Caco-2 (cell line): ENCODE measurements at regions of chr21 and their contacts with region 1.

Region 1: GRCh38 chr21:36028127-36029069 is 31.9 kb downstream of the SETD4 start:
- DNase-seq: peak; percentile 75 to 78
- H3K4me3 ChIP-seq: no peak overlapping the region
- H3K4me3 Mint-ChIP-seq: peak overlapping the region; percentile 35
- H3K27ac Mint-ChIP-seq: peak overlapping the region; percentile 26
- H3K4me1 ChIP-seq: peaks cover 18% of the 10 kb centered on the region
- H3K4me1 Mint-ChIP-seq: peaks cover 21% of the 10 kb centered on the region
- H3K27me3 ChIP-seq: no peaks in the 10 kb centered on the region
- H3K27me3 Mint-ChIP-seq: no peaks in the 10 kb centered on the region
- CTCF ChIP-seq: peak; percentile 80 to 93

Region 2: GRCh38 chr21:35400233-35400957 is 628.0 kb before region 1 on chr21:
- CTCF ChIA-PET with region 1: interaction called, 4 read pairs
- POLR2A ChIA-PET with region 1: no interaction called
- intact Hi-C with region 1: loop called (anchors 5 kb)
- DNase-seq: peak; percentile 39 to 66
- H3K4me3 ChIP-seq: no peak overlapping the region
- H3K4me3 Mint-ChIP-seq: no peak overlapping the region
- H3K27ac Mint-ChIP-seq: no peak overlapping the region
- H3K4me1 ChIP-seq: 0 out of 2 replicates have a peak, but pooled peaks cover 4% of the 10 kb centered on the region
- H3K4me1 Mint-ChIP-seq: no peaks in the 10 kb centered on the region
- H3K27me3 ChIP-seq: no peaks in the 10 kb centered on the region
- H3K27me3 Mint-ChIP-seq: no peaks in the 10 kb centered on the region
- CTCF ChIP-seq: peak; percentile 44 to 51

Region 3: GRCh38 chr21:35882791-35883240 is 145.6 kb before region 1 on chr21:
- CTCF ChIA-PET with region 1: no interaction called
- POLR2A ChIA-PET with region 1: no interaction called
- intact Hi-C with region 1: loop called (anchors 10 kb)
- DNase-seq: no peak
- H3K4me3 ChIP-seq: no peak overlapping the region
- H3K4me3 Mint-ChIP-seq: no peak overlapping the region
- H3K27ac Mint-ChIP-seq: no peak overlapping the region
- H3K4me1 ChIP-seq: no peaks in the 10 kb centered on the region
- H3K4me1 Mint-ChIP-seq: peaks cover 7% of the 10 kb centered on the region
- H3K27me3 ChIP-seq: no peaks in the 10 kb centered on the region
- H3K27me3 Mint-ChIP-seq: no peaks in the 10 kb centered on the region
- CTCF ChIP-seq: no peak

Region 4: DNA sequence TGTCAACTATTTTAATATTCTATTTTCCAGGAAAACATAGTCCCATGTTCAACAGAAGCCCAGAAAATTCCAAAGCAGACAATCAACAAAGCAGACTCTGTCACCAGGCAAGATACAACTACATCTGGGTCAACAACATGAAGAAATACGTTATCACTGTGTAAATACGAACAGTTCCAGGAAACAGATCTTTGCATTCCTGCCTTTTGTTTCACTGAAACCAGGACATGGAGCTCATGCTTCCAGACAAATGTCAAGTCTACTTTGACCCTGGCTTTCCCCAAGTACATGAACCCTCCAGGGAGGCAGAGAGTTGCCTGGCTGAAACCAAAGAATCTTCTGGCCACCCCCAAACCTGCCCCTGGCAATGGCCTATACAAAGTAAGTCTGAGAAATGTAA is 74.8 kb before region 1 on chr21:
- CTCF ChIA-PET with region 1: interaction called, 5 read pairs
- POLR2A ChIA-PET with region 1: no interaction called
- intact Hi-C with region 1: loop called (anchors 1 kb)
- DNase-seq: peak; percentile 83 to 85
- H3K4me3 ChIP-seq: no peak overlapping the region
- H3K4me3 Mint-ChIP-seq: no peak overlapping the region
- H3K27ac Mint-ChIP-seq: peak overlapping the region; percentile 91
- H3K4me1 ChIP-seq: peaks cover 72% of the 10 kb centered on the region
- H3K4me1 Mint-ChIP-seq: peaks cover 26% of the 10 kb centered on the region
- H3K27me3 ChIP-seq: no peaks in the 10 kb centered on the region
- H3K27me3 Mint-ChIP-seq: no peaks in the 10 kb centered on the region
- CTCF ChIP-seq: no peak

Region 5: DNA sequence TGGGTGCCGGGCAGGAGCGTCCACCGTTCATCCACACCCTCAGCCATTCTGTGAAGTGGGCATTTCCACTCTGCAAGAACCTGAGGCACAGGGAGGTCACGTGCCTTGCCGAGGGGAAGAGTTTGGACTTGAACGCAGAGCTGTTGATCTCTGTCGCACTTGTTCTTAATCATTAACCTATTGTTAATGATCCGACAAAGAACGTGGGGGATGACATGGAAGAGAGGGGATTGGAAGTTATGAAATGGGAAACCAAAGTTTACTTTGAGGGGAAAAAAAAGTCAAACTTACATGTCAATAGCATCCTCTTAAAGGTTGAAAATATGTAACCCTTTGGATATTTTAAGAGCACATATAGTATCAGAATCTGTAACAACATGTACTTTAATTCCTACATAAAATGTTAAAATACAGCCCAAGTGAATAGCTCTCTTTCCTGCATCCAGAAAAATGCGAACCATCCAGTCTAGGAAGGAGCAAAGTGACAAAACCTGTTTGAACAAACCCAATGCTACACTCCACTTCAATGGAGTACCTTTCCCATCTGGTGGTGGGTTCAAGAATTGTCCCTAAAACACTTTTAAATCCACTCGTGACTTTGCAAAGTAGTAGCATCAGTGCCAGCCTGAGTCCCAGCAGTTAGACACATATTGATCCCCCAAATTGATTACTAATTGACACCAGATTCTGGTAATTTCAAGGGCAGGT is 43.6 kb before region 1 on chr21:
- CTCF ChIA-PET with region 1: interaction called, 5 read pairs
- POLR2A ChIA-PET with region 1: no interaction called
- intact Hi-C with region 1: loop called (anchors 1 kb)
- DNase-seq: peak; percentile 48 to 74
- H3K4me3 ChIP-seq: 0 out of 2 replicates have a peak overlapping the region, but pooled peaks have one; percentile 2
- H3K4me3 Mint-ChIP-seq: peak overlapping the region; percentile 57
- H3K27ac Mint-ChIP-seq: peak overlapping the region; percentile 50
- H3K4me1 ChIP-seq: peaks cover 40% of the 10 kb centered on the region
- H3K4me1 Mint-ChIP-seq: peaks cover 27% of the 10 kb centered on the region
- H3K27me3 ChIP-seq: no peaks in the 10 kb centered on the region
- H3K27me3 Mint-ChIP-seq: no peaks in the 10 kb centered on the region
- CTCF ChIP-seq: peak; percentile 44 to 70

Region 6: DNA sequence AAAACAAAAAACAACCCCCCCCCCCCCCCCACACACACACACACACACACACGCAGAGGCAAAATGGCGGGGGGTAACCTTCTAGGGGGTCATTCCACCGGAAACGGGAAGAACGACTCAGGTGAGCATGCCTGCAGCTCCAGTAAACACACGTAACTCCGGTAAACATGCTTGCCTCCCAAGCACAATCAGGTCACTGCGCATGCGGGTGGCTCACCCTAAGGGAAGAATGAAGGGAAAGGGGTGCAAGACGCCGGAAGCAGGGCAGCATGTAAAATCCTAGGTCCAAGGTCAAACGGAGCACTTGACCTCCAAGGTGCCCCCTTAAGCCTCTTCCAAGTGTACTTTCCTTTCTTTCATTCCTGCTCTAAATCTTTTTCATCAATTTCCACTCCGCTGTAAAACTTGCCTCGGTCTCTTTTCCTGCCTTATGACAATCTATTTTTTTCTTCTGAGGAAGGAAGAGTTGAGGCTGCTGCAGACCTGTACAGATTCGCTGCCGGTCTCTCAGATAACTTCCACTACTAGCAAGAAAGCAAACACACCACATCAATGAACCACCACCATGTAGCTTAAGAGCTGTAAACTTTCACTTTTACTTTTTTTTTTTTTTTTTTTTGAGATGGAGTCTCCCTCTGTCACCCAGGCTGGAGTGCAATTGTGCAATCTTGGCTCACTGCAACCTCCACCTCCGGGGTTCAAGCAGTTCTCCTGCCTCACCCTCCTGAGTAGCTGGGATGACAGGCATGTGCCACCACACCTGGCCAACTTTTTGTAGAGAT is 85.4 kb after region 1 on chr21:
- CTCF ChIA-PET with region 1: no interaction called
- POLR2A ChIA-PET with region 1: no interaction called
- intact Hi-C with region 1: loop called (anchors 2 kb)
- DNase-seq: peak; percentile 56 to 80
- H3K4me3 ChIP-seq: peak overlapping the region; percentile 41
- H3K4me3 Mint-ChIP-seq: peak overlapping the region; percentile 76
- H3K27ac Mint-ChIP-seq: peak overlapping the region; percentile 85
- H3K4me1 ChIP-seq: peaks cover 8% of the 10 kb centered on the region
- H3K4me1 Mint-ChIP-seq: peaks cover 14% of the 10 kb centered on the region
- H3K27me3 ChIP-seq: no peaks in the 10 kb centered on the region
- H3K27me3 Mint-ChIP-seq: no peaks in the 10 kb centered on the region
- CTCF ChIP-seq: no peak